ENCODE measurements at regions of chr13 and their contacts with region 1.

Region 1: GRCh38 chr13:73954808-73955207 is 179.4 kb downstream of the KLF12 start:
- DNase-seq: no peak
- ATAC-seq: no peak

Region 2: DNA sequence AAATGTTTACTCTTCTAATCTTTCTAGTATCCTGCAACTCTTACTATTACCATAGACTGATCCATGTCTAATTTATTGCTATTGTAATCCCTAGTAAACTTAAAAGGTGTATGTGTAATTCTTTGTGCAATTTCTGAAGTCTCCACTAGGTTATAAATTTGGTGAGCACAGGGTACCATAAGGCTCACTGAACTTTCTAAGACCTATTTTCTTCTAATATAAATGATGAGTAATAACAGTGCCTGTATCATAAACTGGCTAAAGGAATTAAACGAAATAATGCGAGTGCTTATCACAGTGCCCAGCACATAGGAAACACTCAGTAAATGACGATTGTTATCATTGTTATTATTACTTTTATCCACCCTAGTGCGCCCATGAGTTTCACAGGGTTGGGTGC is 60.3 kb after region 1 on chr13:
- intact Hi-C with region 1: loop called in 1 of 2 experiments (anchors 10 kb)
- DNase-seq: no peak
- ATAC-seq: no peak

Measured in left colon (tissue), 2 donors.